AG04450 (cell line): ENCODE measurements at regions of chr19 and their contacts with region 1.

Region 1: GRCh38 chr19:1875646-1876495 is 9.4 kb downstream of the ABHD17A start:
- DNase-seq: peak; percentile 34
- H3K4me3 ChIP-seq: peak overlapping the region; percentile 99
- H3K27ac ChIP-seq: peak overlapping the region; percentile 78
- H3K27me3 ChIP-seq: no peaks in the 10 kb centered on the region
- CTCF ChIP-seq: no peak

Region 2: GRCh38 chr19:1832046-1832663 is 43.7 kb before region 1 on chr19:
- CTCF ChIA-PET with region 1: no interaction called
- POLR2A ChIA-PET with region 1: interaction called, 12 read pairs
- DNase-seq: no peak
- H3K4me3 ChIP-seq: no peak overlapping the region
- H3K27ac ChIP-seq: no peak overlapping the region
- H3K27me3 ChIP-seq: no peaks in the 10 kb centered on the region
- CTCF ChIP-seq: no peak

Region 3: DNA sequence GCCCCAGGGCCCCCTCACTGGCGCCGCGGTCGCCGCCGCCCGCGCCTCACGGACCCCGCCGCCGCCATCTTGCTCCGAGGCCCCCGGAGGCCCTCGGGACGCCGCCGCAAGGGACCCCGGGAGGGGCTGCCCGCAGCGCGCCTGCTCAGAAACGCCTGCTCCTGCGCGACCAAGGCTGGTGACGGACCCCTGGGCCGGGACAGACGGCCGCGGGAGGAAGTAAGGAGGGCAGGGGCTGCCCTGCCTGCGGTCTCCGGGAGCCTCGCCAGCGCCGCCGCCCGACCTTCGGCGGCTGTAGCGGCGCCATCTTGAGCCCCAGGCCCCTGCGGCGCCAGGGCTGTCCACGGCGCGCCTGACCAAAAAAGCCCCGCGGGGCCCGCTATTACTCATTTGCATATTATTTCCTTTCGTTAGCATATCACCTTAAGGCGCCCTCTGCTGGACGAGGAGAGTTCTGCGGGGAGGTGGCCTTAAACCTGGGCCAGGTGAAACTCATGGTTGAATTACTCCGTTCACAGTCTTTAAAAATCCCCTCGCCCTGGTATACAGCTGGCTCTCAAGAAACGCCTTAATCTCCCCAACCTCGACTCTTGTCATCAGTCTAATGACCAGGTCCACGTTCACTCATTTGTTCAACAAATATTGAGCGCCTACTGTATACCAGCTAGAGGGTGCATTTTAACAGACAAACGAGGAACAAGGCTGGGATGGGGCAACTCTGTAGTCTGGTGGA is 27.3 kb before region 1 on chr19 and contains the start of gene REXO1:
- CTCF ChIA-PET with region 1: no interaction called
- POLR2A ChIA-PET with region 1: no interaction called
- DNase-seq: peak; percentile 81
- H3K4me3 ChIP-seq: peak within 1 kb of the TSS; percentile 96
- H3K27ac ChIP-seq: peak within 1 kb of the TSS; percentile 91
- H3K27me3 ChIP-seq: no peaks in the 10 kb centered on the region
- CTCF ChIP-seq: peak; percentile 87
- polyA plus RNA-seq, gene REXO1: 5.4 and 8.4 TPM in 2 replicates

Region 4: DNA sequence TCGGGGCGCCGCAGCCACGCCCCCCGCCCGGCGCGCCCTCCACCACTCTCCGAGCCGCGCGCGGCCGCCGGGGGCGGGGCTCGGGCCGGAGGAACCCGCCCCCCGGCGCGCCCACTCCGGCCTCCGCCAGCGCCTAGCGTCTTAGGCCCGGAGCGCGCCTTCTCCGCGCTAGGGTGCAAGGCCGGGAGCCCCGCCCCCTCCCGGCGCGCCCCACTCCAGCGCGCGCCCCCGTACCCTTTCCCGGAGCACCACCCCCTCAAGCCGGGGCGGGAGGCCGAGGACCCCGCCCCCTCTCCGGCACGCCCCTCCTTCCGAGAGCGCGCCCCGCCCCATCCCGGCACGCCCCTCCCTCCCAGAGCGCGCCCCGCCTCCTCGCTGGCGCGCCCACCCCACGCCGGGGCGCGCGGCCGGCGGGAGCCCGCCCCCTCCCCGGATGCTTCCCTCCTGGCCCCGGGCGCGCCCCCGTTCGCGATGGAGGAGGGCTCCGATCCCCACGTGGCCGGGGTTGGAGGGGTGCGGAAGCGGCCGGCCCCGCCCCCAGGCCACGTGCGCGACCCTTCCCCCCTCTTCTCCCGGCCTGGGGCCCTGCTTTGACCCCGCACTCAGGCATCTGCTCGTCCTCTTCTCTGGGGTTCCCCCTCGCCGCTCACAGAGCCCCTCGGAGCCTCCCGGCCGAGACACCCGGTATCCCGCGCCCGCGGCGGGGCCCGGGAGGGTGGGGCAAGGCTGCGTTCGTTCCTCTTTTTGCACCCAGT is 12.0 kb before region 1 on chr19:
- CTCF ChIA-PET with region 1: interaction called, 9 read pairs
- POLR2A ChIA-PET with region 1: interaction called, 19 read pairs
- DNase-seq: peak; percentile 84
- H3K4me3 ChIP-seq: peak overlapping the region; percentile 73
- H3K27ac ChIP-seq: peak overlapping the region; percentile 73
- H3K27me3 ChIP-seq: no peaks in the 10 kb centered on the region
- CTCF ChIP-seq: no peak